ENCODE measurements at regions of chr13 and their contacts with region 1.

Region 1: GRCh38 chr13:48094781-48095502 is at the start of gene MED4:
- DNase-seq: peak; percentile 87
- ATAC-seq: peak; percentile 89
- H3K4me3 ChIP-seq: peak within 1 kb of the TSS; percentile 88 to 93 (median 88)
- H3K27ac ChIP-seq: peak within 1 kb of the TSS; percentile 74
- H3K4me1 ChIP-seq: peaks cover 81% of the 10 kb centered on the region
- H3K27me3 ChIP-seq: no peaks in the 10 kb centered on the region; a peak in 1 of 5 replicates
- CTCF ChIP-seq: peak; percentile 96
- EP300 ChIP-seq: peak in 1 of 2 experiments; percentile 23; a peak in 1 of 4 replicates
- POLR2A ChIP-seq: peak; percentile 88 to 89
- RAD21 ChIP-seq: peak; percentile 80
- total RNA-seq, gene MED4: 57.8 and 82.8 TPM in 2 replicates

Region 2: DNA sequence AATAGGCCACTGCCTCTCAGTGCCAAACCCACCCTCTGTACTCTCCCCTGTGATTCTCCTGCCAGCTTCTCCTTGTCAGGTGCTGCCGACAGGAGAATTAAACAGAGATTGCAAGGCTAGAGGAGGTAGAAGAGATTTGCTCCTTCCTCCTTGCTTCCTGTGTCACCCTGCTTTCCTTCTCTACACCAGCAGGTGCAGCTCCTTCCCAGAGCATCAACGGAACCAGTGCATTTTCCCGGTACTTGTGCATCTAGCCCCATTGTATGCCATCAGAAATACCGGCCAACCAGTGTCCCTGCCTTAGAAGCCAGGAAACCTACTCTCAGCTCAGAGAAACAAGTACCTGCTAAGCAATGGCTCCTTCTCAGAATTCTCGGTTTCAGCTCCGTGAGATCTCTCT is 347.0 kb before region 1 on chr13:
- CTCF ChIA-PET with region 1: no interaction called
- POLR2A ChIA-PET with region 1: no interaction called
- in situ Hi-C with region 1: no loop called
- intact Hi-C with region 1: no loop called
- DNase-seq: no peak
- ATAC-seq: no peak
- H3K4me3 ChIP-seq: no peak overlapping the region
- H3K27ac ChIP-seq: no peak overlapping the region
- H3K4me1 ChIP-seq: no peaks in the 10 kb centered on the region
- H3K27me3 ChIP-seq: no peaks in the 10 kb centered on the region; a peak in 1 of 5 replicates
- CTCF ChIP-seq: no peak
- EP300 ChIP-seq: no peak
- POLR2A ChIP-seq: no peak
- RAD21 ChIP-seq: no peak

Region 3: DNA sequence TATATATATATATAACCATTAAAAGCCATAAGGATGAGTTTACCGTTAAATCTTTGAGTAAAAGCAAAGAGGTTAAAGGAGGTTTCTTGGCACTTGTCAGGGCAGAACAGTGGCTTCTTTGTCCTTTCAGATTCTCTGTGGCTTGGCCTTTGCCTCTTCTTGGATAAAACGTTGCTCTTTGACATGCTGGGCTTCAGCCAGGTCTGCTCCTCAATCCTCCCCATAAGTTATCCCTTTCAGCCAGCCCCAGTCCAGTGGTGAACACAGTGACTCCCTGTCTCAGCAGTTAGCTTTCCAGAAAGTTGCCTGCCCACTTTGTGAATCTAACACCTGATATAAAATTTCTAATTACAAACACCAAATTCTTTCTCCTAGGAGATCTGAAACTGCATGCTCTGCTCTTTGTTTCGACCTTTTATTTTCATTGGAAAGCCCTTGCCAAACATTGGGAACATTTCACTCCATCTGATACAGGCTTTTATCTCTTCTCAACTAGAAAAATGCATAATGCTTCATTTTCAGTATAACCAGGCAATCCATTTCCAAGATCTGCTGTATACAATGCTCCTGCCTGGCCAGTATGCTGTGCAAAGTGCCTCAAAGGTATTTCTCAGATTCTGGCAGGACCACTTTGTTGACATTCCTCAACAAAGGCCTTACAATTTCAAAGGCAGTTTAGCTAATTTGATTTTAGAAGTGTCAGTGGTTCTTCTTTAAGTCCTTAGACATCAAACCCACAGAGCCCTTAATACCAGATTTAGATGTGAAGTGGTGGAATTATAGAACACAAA is 16.2 kb after region 1 on chr13:
- CTCF ChIA-PET with region 1: interaction called, 3 read pairs
- POLR2A ChIA-PET with region 1: interaction called, 3 read pairs
- in situ Hi-C with region 1: no loop called
- intact Hi-C with region 1: loop called (anchors 1 kb)
- DNase-seq: peak; percentile 83
- ATAC-seq: peak; percentile 94
- H3K4me3 ChIP-seq: no peak overlapping the region; a peak in 2 of 6 replicates
- H3K27ac ChIP-seq: peak overlapping the region; percentile 78
- H3K4me1 ChIP-seq: peaks cover 71% of the 10 kb centered on the region
- H3K27me3 ChIP-seq: no peaks in the 10 kb centered on the region
- CTCF ChIP-seq: no peak
- EP300 ChIP-seq: peak in 1 of 2 experiments; percentile 67; a peak in 1 of 4 replicates
- POLR2A ChIP-seq: no peak
- RAD21 ChIP-seq: no peak

Region 4: GRCh38 chr13:48626077-48626449 is 531.1 kb after region 1 on chr13:
- CTCF ChIA-PET with region 1: no interaction called
- POLR2A ChIA-PET with region 1: no interaction called
- in situ Hi-C with region 1: no loop called
- intact Hi-C with region 1: loop called (anchors 5 kb)
- DNase-seq: peak; percentile 91
- ATAC-seq: peak; percentile 74
- H3K4me3 ChIP-seq: peak overlapping the region; percentile 10 to 45 (median 43); a peak in 2 of 6 replicates
- H3K27ac ChIP-seq: peak overlapping the region; percentile 84
- H3K4me1 ChIP-seq: peaks cover 65% of the 10 kb centered on the region
- H3K27me3 ChIP-seq: no peaks in the 10 kb centered on the region
- CTCF ChIP-seq: no peak
- EP300 ChIP-seq: peak in 1 of 2 experiments; percentile 88; a peak in 2 of 4 replicates
- POLR2A ChIP-seq: no peak
- RAD21 ChIP-seq: no peak